CD8-positive, alpha-beta T cell (primary cell): ENCODE measurements at regions of chr11 and their contacts with region 1.

Region 1: GRCh38 chr11:118462178-118462577 is 25.9 kb downstream of the KMT2A start:
- DNase-seq: no peak
- ATAC-seq: no peak
- H3K4me3 ChIP-seq: no peak overlapping the region
- H3K4me3 Mint-ChIP-seq: no peak overlapping the region
- H3K27ac ChIP-seq: no peak overlapping the region
- H3K27ac Mint-ChIP-seq: no peak overlapping the region
- H3K4me1 ChIP-seq: peaks cover 8% of the 10 kb centered on the region
- H3K4me1 Mint-ChIP-seq: peaks cover 51% of the 10 kb centered on the region
- H3K27me3 ChIP-seq: no peaks in the 10 kb centered on the region
- H3K27me3 Mint-ChIP-seq: no peaks in the 10 kb centered on the region
- CTCF ChIP-seq: no peak

Region 2: GRCh38 chr11:118415739-118416284 is 46.4 kb before region 1 on chr11:
- CTCF ChIA-PET with region 1: interaction called, 5 read pairs
- POLR2A ChIA-PET with region 1: no interaction called
- intact Hi-C with region 1: loop called in 1 of 2 experiments (anchors 5 kb)
- DNase-seq: peak in 4 of 9 experiments; percentile 13 to 27 (median 23)
- ATAC-seq: no peak
- H3K4me3 ChIP-seq: no peak overlapping the region
- H3K4me3 Mint-ChIP-seq: no peak overlapping the region
- H3K27ac ChIP-seq: no peak overlapping the region
- H3K27ac Mint-ChIP-seq: no peak overlapping the region
- H3K4me1 ChIP-seq: no peaks in the 10 kb centered on the region
- H3K4me1 Mint-ChIP-seq: no peaks in the 10 kb centered on the region
- H3K27me3 ChIP-seq: no peaks in the 10 kb centered on the region
- H3K27me3 Mint-ChIP-seq: no peaks in the 10 kb centered on the region
- CTCF ChIP-seq: no peak

Region 3: DNA sequence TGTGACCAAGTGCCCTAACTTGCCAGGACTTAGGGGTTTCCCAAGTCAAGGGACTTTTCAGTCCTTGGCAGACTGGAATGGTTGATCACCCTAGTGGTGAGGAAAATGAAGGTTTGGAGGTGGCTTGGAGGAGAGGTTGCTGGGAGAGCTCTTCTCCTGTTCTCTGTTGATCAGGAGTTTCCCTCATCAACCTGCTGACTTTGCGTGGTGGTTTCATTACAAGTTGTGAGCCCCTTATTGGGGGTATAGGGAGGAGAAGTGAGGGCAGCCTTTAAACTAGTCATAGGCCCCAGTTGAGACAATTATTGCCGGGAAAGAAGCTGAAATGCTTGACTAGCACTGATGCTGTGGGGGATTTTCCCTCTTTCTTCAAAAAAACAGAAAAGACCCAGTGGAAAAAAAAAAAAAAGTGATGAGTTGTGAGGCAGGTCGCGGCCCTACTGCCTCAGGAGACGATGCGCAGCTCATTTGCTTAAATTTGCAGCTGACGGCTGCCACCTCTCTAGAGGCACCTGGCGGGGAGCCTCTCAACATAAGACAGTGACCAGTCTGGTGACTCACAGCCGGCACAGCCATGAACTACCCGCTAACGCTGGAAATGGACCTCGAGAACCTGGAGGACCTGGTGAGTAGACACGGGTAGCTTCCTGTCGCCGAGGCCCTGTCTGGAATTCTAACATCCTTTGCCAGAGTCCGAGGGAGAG is 421.3 kb after region 1 on chr11 and contains the start of gene CXCR5:
- CTCF ChIA-PET with region 1: no interaction called
- POLR2A ChIA-PET with region 1: no interaction called
- intact Hi-C with region 1: no loop called
- DNase-seq: peak in 3 of 9 experiments; percentile 43 to 66 (median 48)
- ATAC-seq: peak; percentile 45
- H3K4me3 ChIP-seq: peak within 1 kb of the TSS in 1 of 2 experiments; percentile 28
- H3K4me3 Mint-ChIP-seq: peak within 1 kb of the TSS; percentile 63
- H3K27ac ChIP-seq: no peak within 1 kb of the TSS
- H3K27ac Mint-ChIP-seq: peak within 1 kb of the TSS; percentile 62
- H3K4me1 ChIP-seq: peaks cover 47% of the 10 kb centered on the region
- H3K4me1 Mint-ChIP-seq: peaks cover 71% of the 10 kb centered on the region
- H3K27me3 ChIP-seq: no peaks in the 10 kb centered on the region
- H3K27me3 Mint-ChIP-seq: no peaks in the 10 kb centered on the region
- CTCF ChIP-seq: no peak
- total RNA-seq, gene CXCR5: 7.6 to 8.0 TPM